ENCODE measurements at regions of chr19 and their contacts with region 1.

Region 1: DNA sequence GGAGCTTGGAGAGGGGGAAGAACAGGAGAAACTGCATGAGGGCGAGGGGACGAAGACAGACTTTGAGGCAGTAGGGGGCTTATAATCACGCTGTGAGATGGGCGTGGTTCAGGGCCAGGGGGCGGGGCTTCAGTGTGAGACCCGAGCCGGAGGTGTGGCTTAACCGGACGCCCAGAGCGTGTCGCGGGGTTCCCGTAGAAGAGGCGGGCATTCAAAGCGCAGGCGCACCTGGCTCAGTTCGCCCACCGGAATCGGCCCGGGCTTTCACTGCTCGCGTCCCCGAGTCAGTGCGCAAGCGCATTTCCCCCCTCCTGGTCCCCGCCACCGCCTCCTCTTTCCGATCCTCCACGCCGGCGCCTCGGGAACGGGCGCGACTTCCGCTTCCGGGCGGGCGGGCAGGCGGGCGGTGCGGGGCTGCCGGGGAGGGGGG is 225 bp upstream of the ZNF865 start:
- DNase-seq: peak; percentile 98
- H3K4me3 ChIP-seq: peak overlapping the region in 1 of 3 experiments; percentile 96
- H3K27ac ChIP-seq: peak overlapping the region; percentile 76
- H3K4me1 ChIP-seq: peaks cover 21% of the 10 kb centered on the region
- H3K27me3 ChIP-seq: no peaks in the 10 kb centered on the region
- CTCF ChIP-seq: no peak
- POLR2A ChIP-seq: peak; percentile 59

Region 2: GRCh38 chr19:55166530-55167268 is 438.5 kb before region 1 on chr19 and contains the start of gene DNAAF3:
- CTCF ChIA-PET with region 1: no interaction called
- POLR2A ChIA-PET with region 1: no interaction called
- dilution Hi-C with region 1: no loop called
- intact Hi-C with region 1: loop called (anchors 1 kb)
- DNase-seq: peak; percentile 97
- H3K4me3 ChIP-seq: peak within 1 kb of the TSS in 2 of 3 experiments; percentile 25 to 52
- H3K27ac ChIP-seq: no peak within 1 kb of the TSS
- H3K4me1 ChIP-seq: no peaks in the 10 kb centered on the region
- H3K27me3 ChIP-seq: peaks cover 8 to 15% of the 10 kb centered on the region in 2 experiments
- CTCF ChIP-seq: no peak
- POLR2A ChIP-seq: no peak
- total RNA-seq, gene DNAAF3: 0.62 TPM in 1 of 2 replicates, not detected in the other

Region 3: GRCh38 chr19:55461259-55461973 is 143.8 kb before region 1 on chr19 and contains the start of gene ISOC2:
- CTCF ChIA-PET with region 1: interaction called, 13 read pairs
- POLR2A ChIA-PET with region 1: no interaction called
- dilution Hi-C with region 1: no loop called
- intact Hi-C with region 1: loop called (anchors 5 kb)
- DNase-seq: peak; percentile 100
- H3K4me3 ChIP-seq: peak within 1 kb of the TSS; percentile 39 to 95 (median 70)
- H3K27ac ChIP-seq: peak within 1 kb of the TSS; percentile 63
- H3K4me1 ChIP-seq: peaks cover 13% of the 10 kb centered on the region
- H3K27me3 ChIP-seq: no peaks in the 10 kb centered on the region
- CTCF ChIP-seq: no peak
- POLR2A ChIP-seq: no peak
- total RNA-seq, gene ISOC2: 43.6 and 49.3 TPM in 2 replicates

Region 4: DNA sequence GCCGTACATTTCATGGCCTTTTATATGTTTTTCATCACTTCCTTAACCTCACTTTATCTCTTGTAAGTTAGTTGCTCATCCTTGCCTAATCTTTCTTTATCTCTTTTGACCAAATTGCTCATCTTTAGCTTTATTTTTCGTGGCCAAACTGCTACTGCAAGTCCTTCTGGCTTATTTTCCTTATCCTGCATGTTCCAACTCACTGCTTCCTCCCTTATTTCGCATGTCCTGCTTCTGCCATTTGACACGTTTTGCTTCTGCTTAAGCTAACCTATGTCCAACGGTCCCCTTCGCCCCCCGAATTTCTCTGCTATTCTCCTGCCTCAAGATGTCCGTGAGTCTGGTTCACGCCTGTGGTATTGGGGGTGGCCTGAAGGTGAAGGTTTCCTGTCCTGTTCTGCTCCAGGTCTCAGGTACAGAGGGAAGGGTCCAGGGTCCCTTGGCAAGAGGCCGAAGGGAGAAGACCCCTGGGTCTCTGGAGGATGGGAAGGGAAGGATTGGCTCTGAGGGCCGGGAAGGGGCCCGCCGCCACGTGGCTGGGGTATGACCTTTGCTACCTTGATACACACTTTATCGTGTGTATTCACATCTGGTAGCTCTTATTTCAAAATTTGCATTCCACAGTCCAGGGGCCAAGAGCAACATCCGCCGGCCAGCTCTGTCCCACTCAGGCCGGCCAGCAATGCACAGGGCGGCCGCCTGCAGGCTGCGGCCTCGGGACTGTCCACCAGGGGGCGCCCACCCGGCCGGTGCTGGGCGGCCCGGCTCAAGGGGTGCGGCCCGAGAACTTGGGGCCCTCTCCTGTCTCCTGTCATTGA is 137.8 kb before region 1 on chr19:
- CTCF ChIA-PET with region 1: interaction called, 13 read pairs
- POLR2A ChIA-PET with region 1: interaction called, 4 read pairs
- dilution Hi-C with region 1: no loop called
- intact Hi-C with region 1: loop called (anchors 5 kb)
- DNase-seq: peak; percentile 38
- H3K4me3 ChIP-seq: no peak overlapping the region
- H3K27ac ChIP-seq: no peak overlapping the region
- H3K4me1 ChIP-seq: no peaks in the 10 kb centered on the region
- H3K27me3 ChIP-seq: no peaks in the 10 kb centered on the region
- CTCF ChIP-seq: peak; percentile 97 to 99
- POLR2A ChIP-seq: no peak

Region 5: GRCh38 chr19:55516878-55517620 is 88.2 kb before region 1 on chr19:
- CTCF ChIA-PET with region 1: interaction called, 40 read pairs
- POLR2A ChIA-PET with region 1: no interaction called
- dilution Hi-C with region 1: loop called (anchors 10 kb)
- intact Hi-C with region 1: loop called (anchors 1 kb)
- DNase-seq: peak; percentile 89
- H3K4me3 ChIP-seq: peak overlapping the region in 2 of 3 experiments; percentile 15 to 40
- H3K27ac ChIP-seq: no peak overlapping the region
- H3K4me1 ChIP-seq: no peaks in the 10 kb centered on the region
- H3K27me3 ChIP-seq: no peaks in the 10 kb centered on the region
- CTCF ChIP-seq: peak; percentile 76 to 95
- POLR2A ChIP-seq: peak; percentile 17

Region 6: GRCh38 chr19:55549500-55550320 is 55.5 kb before region 1 on chr19:
- CTCF ChIA-PET with region 1: interaction called, 9 read pairs
- POLR2A ChIA-PET with region 1: no interaction called
- dilution Hi-C with region 1: no loop called
- intact Hi-C with region 1: loop called (anchors 1 kb)
- DNase-seq: peak; percentile 86
- H3K4me3 ChIP-seq: peak overlapping the region in 2 of 3 experiments; percentile 21 to 26
- H3K27ac ChIP-seq: peak overlapping the region; percentile 96
- H3K4me1 ChIP-seq: peaks cover 33% of the 10 kb centered on the region
- H3K27me3 ChIP-seq: peaks cover 0 to 3% of the 10 kb centered on the region in 2 experiments
- CTCF ChIP-seq: peak in 1 of 2 donors; percentile 13
- POLR2A ChIP-seq: no peak

Region 7: GRCh38 chr19:55624109-55625003 is 19.1 kb after region 1 on chr19 and contains the start of gene ZNF784:
- CTCF ChIA-PET with region 1: interaction called, 9 read pairs
- POLR2A ChIA-PET with region 1: interaction called, 3 read pairs
- dilution Hi-C with region 1: no loop called
- intact Hi-C with region 1: loop called (anchors 1 kb)
- DNase-seq: peak; percentile 92
- H3K4me3 ChIP-seq: peak within 1 kb of the TSS; percentile 58 to 78 (median 74)
- H3K27ac ChIP-seq: peak within 1 kb of the TSS; percentile 54
- H3K4me1 ChIP-seq: peaks cover 6% of the 10 kb centered on the region
- H3K27me3 ChIP-seq: no peaks in the 10 kb centered on the region
- CTCF ChIP-seq: no peak
- POLR2A ChIP-seq: peak; percentile 80
- total RNA-seq, gene ZNF784: 4.9 and 7.1 TPM in 2 replicates

Region 8: GRCh38 chr19:55753401-55753800 is 148.2 kb after region 1 on chr19:
- CTCF ChIA-PET with region 1: no interaction called
- POLR2A ChIA-PET with region 1: no interaction called
- dilution Hi-C with region 1: no loop called
- intact Hi-C with region 1: no loop called
- DNase-seq: no peak
- H3K4me3 ChIP-seq: no peak overlapping the region
- H3K27ac ChIP-seq: no peak overlapping the region
- H3K4me1 ChIP-seq: no peaks in the 10 kb centered on the region
- H3K27me3 ChIP-seq: no peaks in the 10 kb centered on the region
- CTCF ChIP-seq: no peak
- POLR2A ChIP-seq: no peak

Measured in endothelial cell of umbilical vein (primary cell).